ENCODE measurements at regions of chr11 and their contacts with region 1.

Region 1: GRCh38 chr11:10208131-10208575 is 85.9 kb downstream of the SBF2 start:
- DNase-seq: peak; percentile 32
- ATAC-seq: peak; percentile 71
- H3K4me3 ChIP-seq: no peak overlapping the region
- H3K27ac ChIP-seq: no peak overlapping the region
- H3K4me1 ChIP-seq: no peaks in the 10 kb centered on the region
- H3K27me3 ChIP-seq: peaks cover 0 to 5% of the 10 kb centered on the region in 2 experiments; a peak in 2 of 4 replicates
- CTCF ChIP-seq: peak; percentile 56 to 59 (median 56); a peak in 5 of 6 replicates
- EP300 ChIP-seq: no peak
- POLR2A ChIP-seq: no peak
- RAD21 ChIP-seq: peak; percentile 59

Region 2: GRCh38 chr11:10197091-10197490 is 11.1 kb before region 1 on chr11:
- CTCF ChIA-PET with region 1: interaction called, 23 read pairs
- POLR2A ChIA-PET with region 1: no interaction called
- RAD21 ChIA-PET with region 1: no interaction called
- SMC1A ChIA-PET with region 1: interaction called, 3 read pairs
- in situ Hi-C with region 1: no loop called
- intact Hi-C with region 1: no loop called
- DNase-seq: no peak
- ATAC-seq: no peak
- H3K4me3 ChIP-seq: no peak overlapping the region
- H3K27ac ChIP-seq: no peak overlapping the region
- H3K4me1 ChIP-seq: no peaks in the 10 kb centered on the region
- H3K27me3 ChIP-seq: no peaks in the 10 kb centered on the region
- CTCF ChIP-seq: no peak
- EP300 ChIP-seq: no peak
- POLR2A ChIP-seq: no peak
- RAD21 ChIP-seq: no peak

Region 3: GRCh38 chr11:10307442-10308207 is 99.5 kb after region 1 on chr11:
- CTCF ChIA-PET with region 1: interaction called, 91 read pairs
- POLR2A ChIA-PET with region 1: no interaction called
- RAD21 ChIA-PET with region 1: interaction called, 24 read pairs
- SMC1A ChIA-PET with region 1: interaction called, 41 read pairs
- in situ Hi-C with region 1: no loop called
- intact Hi-C with region 1: loop called (anchors 1 kb)
- DNase-seq: peak; percentile 60
- ATAC-seq: peak; percentile 84
- H3K4me3 ChIP-seq: peak overlapping the region; percentile 48; the same call in 1 of the 2 replicates
- H3K27ac ChIP-seq: peak overlapping the region; percentile 20; the same call in 1 of the 2 replicates
- H3K4me1 ChIP-seq: peaks cover 47% of the 10 kb centered on the region
- H3K27me3 ChIP-seq: peaks cover 32 to 41% of the 10 kb centered on the region in 2 experiments
- CTCF ChIP-seq: peak; percentile 78 to 89 (median 87)
- EP300 ChIP-seq: 0 out of 4 replicates have a peak, but pooled peaks of 1 of the 2 experiments have one; percentile 16
- POLR2A ChIP-seq: no peak; the same call in 1 of the 2 replicates
- RAD21 ChIP-seq: peak; percentile 86

Region 4: GRCh38 chr11:10314199-10315072 is 106.3 kb after region 1 on chr11:
- CTCF ChIA-PET with region 1: interaction called, 91 read pairs
- POLR2A ChIA-PET with region 1: no interaction called
- RAD21 ChIA-PET with region 1: interaction called, 24 read pairs
- SMC1A ChIA-PET with region 1: interaction called, 41 read pairs
- in situ Hi-C with region 1: no loop called
- intact Hi-C with region 1: no loop called
- DNase-seq: peak; percentile 66
- ATAC-seq: peak; percentile 77
- H3K4me3 ChIP-seq: no peak overlapping the region
- H3K27ac ChIP-seq: no peak overlapping the region
- H3K4me1 ChIP-seq: peaks cover 31% of the 10 kb centered on the region
- H3K27me3 ChIP-seq: no peaks in the 10 kb centered on the region
- CTCF ChIP-seq: no peak
- EP300 ChIP-seq: no peak
- POLR2A ChIP-seq: no peak
- RAD21 ChIP-seq: no peak

Region 5: DNA sequence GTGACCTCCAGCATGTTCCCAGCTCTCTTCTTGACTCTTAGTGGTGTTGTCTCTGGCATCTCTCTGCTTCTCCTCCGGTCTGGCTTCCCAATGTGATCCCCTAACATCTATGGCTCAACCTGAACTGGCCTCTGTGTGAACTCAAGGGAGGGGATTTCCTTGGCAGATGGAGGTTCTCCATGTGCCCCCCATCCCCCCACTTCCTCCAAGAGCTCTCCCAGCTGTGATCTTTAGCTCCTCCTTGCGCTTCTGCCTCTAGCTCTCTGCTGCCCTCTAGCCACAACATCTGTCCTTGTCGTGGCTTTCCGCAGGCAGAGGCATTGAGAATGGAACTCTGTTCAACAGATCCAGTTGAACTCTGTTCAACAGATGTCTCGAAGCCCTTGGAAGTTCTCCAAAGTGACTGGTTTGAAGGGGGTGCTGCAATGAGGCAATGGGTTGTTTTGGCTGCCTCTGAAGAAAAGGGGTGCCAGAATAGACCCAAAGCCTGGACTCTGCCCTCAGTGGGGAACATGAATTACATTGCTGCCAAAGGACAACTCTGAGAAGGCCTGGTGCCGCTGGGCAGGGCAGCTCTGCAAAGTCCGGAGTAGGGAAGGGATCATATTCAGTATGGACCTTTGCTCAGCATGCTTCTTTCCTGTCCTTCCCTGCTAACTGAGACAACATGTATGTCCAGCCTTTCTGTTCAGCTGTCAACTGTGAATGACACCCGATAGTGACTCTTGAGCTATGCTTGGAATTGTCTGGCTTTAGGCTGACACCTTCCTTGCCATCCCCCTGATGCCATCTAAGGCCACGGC is 158.6 kb after region 1 on chr11:
- CTCF ChIA-PET with region 1: interaction called, 30 read pairs
- POLR2A ChIA-PET with region 1: no interaction called
- RAD21 ChIA-PET with region 1: no interaction called
- SMC1A ChIA-PET with region 1: interaction called, 20 read pairs
- in situ Hi-C with region 1: no loop called
- intact Hi-C with region 1: loop called (anchors 2 kb)
- DNase-seq: peak; percentile 57
- ATAC-seq: peak; percentile 98
- H3K4me3 ChIP-seq: no peak overlapping the region
- H3K27ac ChIP-seq: no peak overlapping the region
- H3K4me1 ChIP-seq: no peaks in the 10 kb centered on the region; the same call in 1 of the 2 replicates
- H3K27me3 ChIP-seq: no peaks in the 10 kb centered on the region
- CTCF ChIP-seq: peak; percentile 85 to 92 (median 91)
- EP300 ChIP-seq: peak in 1 of 2 experiments; percentile 37; a peak in 1 of 4 replicates
- POLR2A ChIP-seq: no peak
- RAD21 ChIP-seq: peak; percentile 75

Measured in GM12878 (cell line).